ENCODE measurements at regions of chr5 and their contacts with region 1.

Region 1: GRCh38 chr5:43120720-43121564 is at the start of gene ZNF131:
- DNase-seq: peak; percentile 97
- H3K4me3 Mint-ChIP-seq: peak within 1 kb of the TSS; percentile 97
- H3K27ac Mint-ChIP-seq: peak within 1 kb of the TSS; percentile 96
- H3K4me1 Mint-ChIP-seq: peaks cover 33% of the 10 kb centered on the region
- H3K27me3 Mint-ChIP-seq: no peaks in the 10 kb centered on the region
- total RNA-seq, gene ZNF131: 27.3 to 27.8 TPM

Region 2: DNA sequence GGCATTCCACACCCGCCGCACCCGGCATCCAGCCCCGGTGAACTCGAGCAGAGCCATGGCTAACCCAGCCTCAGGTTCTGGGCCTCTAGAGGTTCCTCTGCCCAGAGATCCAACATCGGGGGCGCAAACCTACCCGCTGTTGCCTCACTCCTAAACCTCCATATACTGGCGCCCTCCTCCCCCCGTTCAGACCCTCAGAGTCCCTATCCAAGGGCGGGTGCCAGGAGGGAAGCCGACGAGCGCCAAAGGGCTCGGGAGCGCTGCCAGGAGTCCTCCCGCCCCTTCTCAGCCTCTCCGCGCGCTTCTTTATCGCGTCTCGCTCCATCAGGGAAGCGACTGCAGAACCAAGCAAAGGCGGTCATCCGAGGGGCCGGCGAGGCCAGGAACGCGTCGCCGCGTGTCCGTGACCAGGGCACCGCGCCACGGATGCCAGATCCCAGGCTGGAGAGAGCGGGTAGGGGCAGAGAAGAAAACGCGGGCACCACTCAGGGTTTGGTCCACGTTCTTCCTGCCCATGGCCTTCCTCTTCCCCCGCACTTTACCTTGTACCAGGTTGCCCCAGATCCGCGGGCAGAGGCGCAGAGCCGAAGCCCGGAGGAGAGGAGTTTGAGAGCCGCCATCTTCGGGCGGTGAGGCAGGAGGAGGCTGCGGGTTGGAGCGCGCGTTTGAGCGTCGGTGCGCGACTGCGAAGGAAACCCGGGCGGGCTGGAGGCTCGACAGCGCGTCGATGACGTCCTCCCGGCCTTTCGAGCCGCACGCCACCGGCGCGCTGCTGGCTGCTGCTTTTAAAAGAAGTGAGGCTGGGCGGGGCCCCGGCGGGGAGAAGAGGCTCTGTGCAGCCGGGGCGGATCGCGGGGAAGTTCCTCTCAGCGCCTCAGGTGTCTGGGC is 1251.0 kb before region 1 on chr5 and contains the start of gene OXCT1:
- CTCF ChIA-PET with region 1: no interaction called
- POLR2A ChIA-PET with region 1: no interaction called
- intact Hi-C with region 1: loop called (anchors 5 kb)
- DNase-seq: peak; percentile 95
- H3K4me3 Mint-ChIP-seq: peak within 1 kb of the TSS; percentile 92
- H3K27ac Mint-ChIP-seq: peak within 1 kb of the TSS; percentile 87
- H3K4me1 Mint-ChIP-seq: peaks cover 56% of the 10 kb centered on the region
- H3K27me3 Mint-ChIP-seq: no peaks in the 10 kb centered on the region
- total RNA-seq, gene OXCT1: 110 to 117 TPM

Region 3: GRCh38 chr5:42583322-42583721 is 537.6 kb before region 1 on chr5:
- CTCF ChIA-PET with region 1: no interaction called
- POLR2A ChIA-PET with region 1: no interaction called
- intact Hi-C with region 1: no loop called
- DNase-seq: peak; percentile 31
- H3K4me3 Mint-ChIP-seq: no peak overlapping the region
- H3K27ac Mint-ChIP-seq: no peak overlapping the region
- H3K4me1 Mint-ChIP-seq: peaks cover 2% of the 10 kb centered on the region
- H3K27me3 Mint-ChIP-seq: peaks cover 13% of the 10 kb centered on the region

Region 4: DNA sequence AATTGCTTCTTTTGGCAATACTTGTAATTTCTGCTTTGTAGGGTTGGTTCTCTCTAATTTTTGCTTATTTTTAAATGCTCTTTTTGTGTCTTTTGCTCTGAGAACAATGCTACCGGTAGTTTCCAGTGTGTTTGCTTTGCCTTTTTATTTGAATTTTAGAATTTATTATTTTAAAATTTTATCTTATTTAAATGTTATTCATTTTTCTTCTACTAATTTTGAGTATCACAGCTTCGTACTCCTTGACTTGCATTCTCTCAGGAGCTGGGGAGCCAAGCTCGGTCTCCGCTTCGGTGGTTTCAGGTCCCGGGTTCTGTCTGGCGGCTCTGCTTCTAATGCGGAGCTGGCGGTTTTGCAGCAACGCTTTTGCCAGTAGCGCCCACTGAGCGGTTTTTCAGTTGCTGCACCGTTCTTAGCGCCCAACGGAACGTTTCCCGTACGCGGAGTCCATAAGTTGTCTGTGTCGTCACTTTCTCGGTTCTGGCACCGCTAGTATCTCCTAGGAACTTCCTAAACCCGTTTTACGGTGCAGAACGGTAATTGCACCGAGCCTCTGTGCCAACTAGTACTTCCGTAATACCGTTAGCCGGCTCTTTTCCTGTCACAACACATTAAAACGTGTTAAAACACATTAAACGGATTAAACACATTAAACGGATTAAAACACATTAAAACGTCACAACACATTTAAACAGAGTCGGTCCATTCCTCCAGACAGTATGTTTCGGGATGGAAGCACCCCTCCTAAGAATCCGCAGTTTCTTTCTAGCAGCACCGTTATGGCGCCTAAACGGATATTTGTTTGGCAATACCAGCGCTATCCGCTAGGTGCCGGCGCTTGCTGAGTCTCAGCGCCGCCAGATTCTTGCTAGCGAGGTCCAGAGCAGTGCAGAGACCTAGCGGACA is 126.4 kb before region 1 on chr5:
- CTCF ChIA-PET with region 1: interaction called, 7 read pairs
- POLR2A ChIA-PET with region 1: interaction called, 15 read pairs
- intact Hi-C with region 1: loop called (anchors 1 kb)
- DNase-seq: peak; percentile 93
- H3K4me3 Mint-ChIP-seq: peak overlapping the region; percentile 87
- H3K27ac Mint-ChIP-seq: peak overlapping the region; percentile 94
- H3K4me1 Mint-ChIP-seq: peaks cover 25% of the 10 kb centered on the region
- H3K27me3 Mint-ChIP-seq: no peaks in the 10 kb centered on the region

Region 5: DNA sequence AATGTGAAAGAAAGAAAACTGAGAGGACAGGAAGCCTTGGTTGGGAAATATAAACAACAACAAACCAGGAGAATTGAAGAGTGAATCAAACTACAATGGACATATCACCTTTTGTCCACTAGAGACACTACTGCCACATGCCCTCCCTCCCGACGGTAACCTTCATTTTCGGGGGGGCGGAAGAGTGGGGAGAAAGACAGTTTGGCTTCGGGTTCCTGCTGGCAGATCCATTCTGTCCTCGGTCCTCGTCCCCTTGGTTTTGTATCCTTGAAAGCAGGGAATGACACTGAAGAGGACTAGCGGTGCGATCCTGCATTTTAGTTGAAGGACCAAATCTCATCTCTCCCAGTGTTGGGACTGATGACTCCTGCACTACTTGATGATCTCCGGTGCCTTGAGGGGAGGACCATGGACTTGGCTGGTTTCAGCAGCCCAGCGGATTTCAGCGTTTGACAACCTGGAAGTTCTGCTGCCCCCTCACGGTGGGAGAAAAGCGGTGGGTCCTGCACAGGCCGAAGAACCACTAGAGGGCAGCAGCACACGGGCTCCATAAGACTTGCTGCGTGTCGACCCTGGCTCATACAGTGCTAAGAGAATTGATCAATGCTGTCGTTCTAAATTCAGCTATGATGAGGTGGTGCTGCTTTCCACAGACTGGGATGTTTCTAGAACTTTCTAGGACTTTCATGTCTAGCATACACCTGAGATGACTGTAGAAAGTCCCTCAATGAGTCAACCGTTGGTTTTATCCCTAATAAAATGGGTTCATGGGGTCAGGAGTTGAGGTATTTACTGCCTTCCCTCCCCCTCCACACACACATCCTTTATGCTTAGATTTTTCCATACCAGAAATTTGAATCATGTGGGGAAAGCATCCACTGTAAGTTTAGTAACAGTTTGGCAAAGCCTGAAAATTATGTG is 15.3 kb before region 1 on chr5:
- CTCF ChIA-PET with region 1: interaction called, 58 read pairs
- POLR2A ChIA-PET with region 1: interaction called, 23 read pairs
- intact Hi-C with region 1: loop called (anchors 1 kb)
- DNase-seq: peak; percentile 92
- H3K4me3 Mint-ChIP-seq: peak overlapping the region; percentile 75
- H3K27ac Mint-ChIP-seq: peak overlapping the region; percentile 79
- H3K4me1 Mint-ChIP-seq: peaks cover 49% of the 10 kb centered on the region
- H3K27me3 Mint-ChIP-seq: no peaks in the 10 kb centered on the region

Region 6: DNA sequence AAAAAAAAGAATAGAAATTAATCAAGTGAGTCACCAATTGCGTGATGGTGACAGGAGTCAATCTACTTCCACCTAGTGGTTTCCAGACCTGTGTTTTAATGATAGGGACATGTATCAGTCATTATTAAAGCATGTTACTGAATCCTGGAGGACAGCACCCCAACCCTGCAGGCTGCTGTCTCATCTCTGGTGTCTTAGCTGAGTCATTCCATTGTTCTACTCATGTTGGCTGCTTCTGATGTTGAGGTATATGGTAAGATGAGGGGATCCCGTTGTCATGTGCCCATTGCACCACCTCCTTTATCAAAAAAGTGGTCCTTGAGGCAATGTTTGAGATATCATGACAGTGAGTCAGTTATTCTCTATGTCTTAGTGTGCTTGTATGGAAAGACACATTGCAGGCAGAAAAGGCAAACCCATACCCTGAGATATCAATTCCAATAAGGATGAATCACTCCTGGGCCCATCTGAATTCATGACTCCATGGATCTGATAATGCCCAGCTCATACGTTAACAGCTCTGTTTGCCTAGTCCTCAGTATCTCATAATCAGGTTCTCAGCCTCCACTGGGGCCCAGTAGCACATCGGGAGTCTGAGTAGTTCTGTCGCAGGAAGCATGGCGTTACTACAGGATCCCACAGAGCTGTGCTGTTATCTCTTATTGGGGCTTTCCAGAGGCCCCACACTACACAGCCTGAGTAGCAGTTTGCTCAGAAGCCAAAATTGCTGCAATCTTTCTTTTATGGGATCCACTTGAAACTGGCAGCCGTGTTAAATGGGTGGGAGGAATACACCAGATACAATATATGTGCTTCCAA is 161.1 kb after region 1 on chr5:
- CTCF ChIA-PET with region 1: no interaction called
- POLR2A ChIA-PET with region 1: interaction called, 4 read pairs
- intact Hi-C with region 1: loop called (anchors 5 kb)
- DNase-seq: peak; percentile 62
- H3K4me3 Mint-ChIP-seq: no peak overlapping the region
- H3K27ac Mint-ChIP-seq: no peak overlapping the region
- H3K4me1 Mint-ChIP-seq: peaks cover 21% of the 10 kb centered on the region
- H3K27me3 Mint-ChIP-seq: no peaks in the 10 kb centered on the region

Region 7: DNA sequence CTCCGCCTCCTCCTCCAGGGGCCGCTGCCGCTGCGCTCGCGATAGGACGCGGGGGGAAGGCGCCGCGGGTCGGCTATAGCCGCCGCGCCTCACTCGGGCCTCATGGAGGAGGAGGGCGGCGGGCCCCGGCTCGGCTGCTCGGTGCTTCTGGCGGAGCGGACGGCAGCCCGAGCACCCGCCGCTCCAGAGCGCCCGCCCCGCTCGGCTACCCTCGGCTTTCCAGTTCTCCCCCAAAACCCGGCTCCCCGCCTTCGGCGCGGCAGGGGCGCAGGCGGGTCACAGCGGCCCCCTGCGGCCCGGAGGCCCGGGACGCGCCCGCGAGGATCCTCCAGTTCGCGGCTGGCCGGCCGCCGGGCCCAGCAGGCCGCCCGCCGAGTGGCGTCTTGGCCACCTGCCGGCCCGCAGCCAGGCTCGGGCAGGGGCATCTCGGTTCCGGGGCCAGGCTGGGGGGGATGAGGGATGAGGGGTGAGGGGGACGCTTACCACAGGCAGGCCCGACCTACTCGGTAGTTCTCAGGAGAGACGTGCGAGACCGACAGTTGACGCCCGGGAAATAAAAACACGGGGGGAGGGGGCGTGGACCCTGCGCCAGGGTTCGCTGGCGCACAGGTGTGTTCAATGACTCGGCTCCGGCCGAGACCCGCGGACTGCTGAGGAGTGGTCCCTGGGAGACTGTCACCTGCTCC is 436.1 kb after region 1 on chr5 and contains the start of gene PAIP1:
- CTCF ChIA-PET with region 1: no interaction called
- POLR2A ChIA-PET with region 1: no interaction called
- intact Hi-C with region 1: loop called (anchors 5 kb)
- DNase-seq: peak; percentile 89
- H3K4me3 Mint-ChIP-seq: peak within 1 kb of the TSS; percentile 90
- H3K27ac Mint-ChIP-seq: peak within 1 kb of the TSS; percentile 91
- H3K4me1 Mint-ChIP-seq: peaks cover 15% of the 10 kb centered on the region
- H3K27me3 Mint-ChIP-seq: no peaks in the 10 kb centered on the region
- total RNA-seq, gene PAIP1: 49.2 to 50.5 TPM